ENCODE measurements at regions of chr4 and their contacts with region 1.

Region 1: GRCh38 chr4:145618932-145619638 is at the start of gene MMAA:
- DNase-seq: peak; percentile 75
- ATAC-seq: peak; percentile 93
- H3K4me3 ChIP-seq: peak within 1 kb of the TSS; percentile 88
- H3K27ac ChIP-seq: peak within 1 kb of the TSS; percentile 89
- H3K4me1 ChIP-seq: peaks cover 9% of the 10 kb centered on the region; the same call in 1 of the 2 replicates
- H3K27me3 ChIP-seq: no peaks in the 10 kb centered on the region
- CTCF ChIP-seq: peak; percentile 42 to 63 (median 55)
- EP300 ChIP-seq: 0 out of 4 replicates have a peak, but pooled peaks of 1 of the 2 experiments have one; percentile 30
- POLR2A ChIP-seq: peak; percentile 99
- RAD21 ChIP-seq: peak; percentile 47
- polyA plus RNA-seq, gene MMAA: 9.2 to 11.0 TPM

Region 2: DNA sequence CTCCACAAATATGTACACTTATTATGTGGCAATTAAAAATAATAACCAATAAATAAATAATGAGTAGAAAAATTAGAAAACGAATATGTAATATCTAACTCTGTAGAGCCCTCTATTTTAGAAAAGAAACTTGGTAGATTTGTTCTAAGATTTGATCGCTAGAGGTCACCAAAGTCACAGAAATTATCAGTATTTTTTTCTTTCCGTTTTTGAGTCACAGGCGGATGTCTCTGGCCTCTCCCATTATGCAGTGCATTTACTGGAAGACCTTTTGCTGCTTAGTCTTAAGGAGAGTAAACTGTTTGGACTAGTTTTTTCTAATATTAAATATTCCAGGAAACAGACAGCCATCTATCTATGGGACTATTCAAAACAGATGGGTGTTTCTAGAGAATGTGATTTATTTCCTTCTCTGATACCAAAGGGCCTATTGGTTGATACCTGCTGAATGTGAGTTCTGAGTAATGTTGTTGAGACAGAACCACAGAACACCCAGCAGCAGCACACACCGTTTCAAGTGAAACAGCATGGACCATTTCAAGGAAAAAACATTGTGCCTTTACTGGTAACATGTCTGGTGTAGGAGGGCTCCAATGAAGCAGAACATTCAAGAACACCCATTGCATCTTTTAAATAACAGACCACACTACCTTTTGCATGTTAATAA is 1444.6 kb before region 1 on chr4:
- CTCF ChIA-PET with region 1: interaction called, 6 read pairs
- POLR2A ChIA-PET with region 1: no interaction called
- RAD21 ChIA-PET with region 1: no interaction called
- SMC1A ChIA-PET with region 1: no interaction called
- in situ Hi-C with region 1: loop called (anchors 25 kb)
- intact Hi-C with region 1: no loop called
- DNase-seq: peak; percentile 16
- ATAC-seq: peak; percentile 86
- H3K4me3 ChIP-seq: no peak overlapping the region
- H3K27ac ChIP-seq: no peak overlapping the region
- H3K4me1 ChIP-seq: no peaks in the 10 kb centered on the region
- H3K27me3 ChIP-seq: no peaks in the 10 kb centered on the region; a peak in 1 of 4 replicates
- CTCF ChIP-seq: peak; percentile 32 to 63 (median 40); a peak in 5 of 6 replicates
- EP300 ChIP-seq: no peak
- POLR2A ChIP-seq: no peak
- RAD21 ChIP-seq: peak; percentile 83

Region 3: GRCh38 chr4:145180298-145181090 is 438.6 kb before region 1 on chr4 and contains the start of gene OTUD4:
- CTCF ChIA-PET with region 1: interaction called, 11 read pairs
- POLR2A ChIA-PET with region 1: interaction called, 12 read pairs
- RAD21 ChIA-PET with region 1: interaction called, 6 read pairs
- SMC1A ChIA-PET with region 1: interaction called, 16 read pairs
- in situ Hi-C with region 1: no loop called
- intact Hi-C with region 1: loop called (anchors 2 kb)
- DNase-seq: peak; percentile 79
- ATAC-seq: peak; percentile 81
- H3K4me3 ChIP-seq: peak within 1 kb of the TSS; percentile 91
- H3K27ac ChIP-seq: peak within 1 kb of the TSS; percentile 95
- H3K4me1 ChIP-seq: peaks cover 25% of the 10 kb centered on the region
- H3K27me3 ChIP-seq: no peaks in the 10 kb centered on the region
- CTCF ChIP-seq: peak; percentile 20 to 44 (median 23); a peak in 4 of 6 replicates
- EP300 ChIP-seq: peak; percentile 33 to 50; a peak in 1 of 4 replicates
- POLR2A ChIP-seq: peak; percentile 80
- RAD21 ChIP-seq: peak; percentile 51; the same call in 1 of the 2 replicates
- polyA plus RNA-seq, gene OTUD4: 2.8 to 4.4 TPM

Region 4: DNA sequence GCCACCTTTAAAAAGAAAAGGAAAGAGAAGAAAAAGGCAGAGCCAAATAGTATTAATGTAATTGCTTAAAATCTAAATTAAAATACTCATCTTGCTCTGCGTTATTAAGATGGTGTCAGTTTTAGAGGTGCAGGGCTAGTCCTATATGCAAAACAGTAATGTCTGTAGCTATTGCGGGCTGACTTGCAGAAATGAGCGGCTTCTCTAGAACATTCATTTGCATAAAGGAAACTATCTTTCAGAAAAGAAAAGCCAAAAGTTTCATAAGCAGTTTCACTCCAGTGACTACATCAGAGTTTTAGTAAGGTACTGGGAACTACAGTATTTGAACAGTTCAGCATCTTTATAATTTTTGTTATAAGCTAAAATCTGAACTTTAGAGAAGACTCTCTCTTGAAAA is 131.5 kb before region 1 on chr4:
- CTCF ChIA-PET with region 1: no interaction called
- POLR2A ChIA-PET with region 1: no interaction called
- RAD21 ChIA-PET with region 1: no interaction called
- SMC1A ChIA-PET with region 1: no interaction called
- in situ Hi-C with region 1: no loop called
- intact Hi-C with region 1: loop called (anchors 5 kb)
- DNase-seq: peak; percentile 71
- ATAC-seq: peak; percentile 99
- H3K4me3 ChIP-seq: peak overlapping the region; percentile 60; the same call in 1 of the 2 replicates
- H3K27ac ChIP-seq: peak overlapping the region; percentile 56
- H3K4me1 ChIP-seq: peaks cover 9% of the 10 kb centered on the region; the same call in 1 of the 2 replicates
- H3K27me3 ChIP-seq: no peaks in the 10 kb centered on the region; a peak in 2 of 4 replicates
- CTCF ChIP-seq: no peak
- EP300 ChIP-seq: peak in 1 of 2 experiments; percentile 67; a peak in 2 of 4 replicates
- POLR2A ChIP-seq: no peak
- RAD21 ChIP-seq: no peak

Region 5: DNA sequence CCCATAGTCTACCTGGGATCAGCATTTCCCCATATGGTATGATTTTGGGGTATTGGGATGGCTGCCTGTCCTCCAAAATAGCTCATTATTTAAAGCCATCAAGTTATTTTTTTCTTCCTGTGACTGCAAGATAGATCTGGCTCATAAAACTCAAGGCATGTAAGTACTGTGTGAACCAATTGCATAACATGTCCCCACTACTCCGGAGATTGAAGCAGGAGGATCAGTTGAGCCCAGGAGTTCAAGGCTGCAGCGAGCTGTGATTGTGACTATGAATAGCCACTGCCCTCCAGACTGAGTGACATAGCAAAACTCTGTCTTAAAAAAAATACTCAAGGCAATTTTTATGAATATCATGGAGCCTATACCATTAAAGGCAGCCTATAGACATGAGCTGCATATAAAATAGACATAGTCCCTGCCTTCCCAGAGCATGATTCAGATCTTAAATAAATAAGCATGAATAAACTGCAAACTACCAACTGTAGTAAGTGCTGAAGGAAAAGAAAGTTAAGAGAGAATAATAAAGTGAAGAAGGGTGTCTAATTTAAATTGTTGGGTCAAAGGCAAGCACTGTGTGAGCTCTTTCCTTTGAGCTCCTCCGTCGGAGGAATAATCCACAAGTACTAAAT is 16.8 kb before region 1 on chr4:
- CTCF ChIA-PET with region 1: interaction called, 12 read pairs
- POLR2A ChIA-PET with region 1: no interaction called
- RAD21 ChIA-PET with region 1: interaction called, 4 read pairs
- SMC1A ChIA-PET with region 1: interaction called, 11 read pairs
- in situ Hi-C with region 1: no loop called
- intact Hi-C with region 1: no loop called
- DNase-seq: no peak
- ATAC-seq: no peak
- H3K4me3 ChIP-seq: no peak overlapping the region
- H3K27ac ChIP-seq: no peak overlapping the region
- H3K4me1 ChIP-seq: no peaks in the 10 kb centered on the region
- H3K27me3 ChIP-seq: no peaks in the 10 kb centered on the region; a peak in 1 of 4 replicates
- CTCF ChIP-seq: no peak
- EP300 ChIP-seq: no peak
- POLR2A ChIP-seq: no peak
- RAD21 ChIP-seq: no peak

Region 6: GRCh38 chr4:145732895-145733880 is 114.1 kb after region 1 on chr4:
- CTCF ChIA-PET with region 1: no interaction called
- POLR2A ChIA-PET with region 1: no interaction called
- RAD21 ChIA-PET with region 1: interaction called, 4 read pairs
- SMC1A ChIA-PET with region 1: interaction called, 3 read pairs
- in situ Hi-C with region 1: no loop called
- intact Hi-C with region 1: loop called (anchors 5 kb)
- DNase-seq: peak; percentile 35
- ATAC-seq: peak; percentile 95
- H3K4me3 ChIP-seq: peak overlapping the region; percentile 85
- H3K27ac ChIP-seq: peak overlapping the region; percentile 6; the same call in 1 of the 2 replicates
- H3K4me1 ChIP-seq: peaks cover 16% of the 10 kb centered on the region
- H3K27me3 ChIP-seq: no peaks in the 10 kb centered on the region; a peak in 1 of 4 replicates
- CTCF ChIP-seq: no peak
- EP300 ChIP-seq: no peak
- POLR2A ChIP-seq: peak; percentile 47; the same call in 1 of the 2 replicates
- RAD21 ChIP-seq: no peak

Region 7: GRCh38 chr4:145830699-145831098 is 211.6 kb after region 1 on chr4:
- CTCF ChIA-PET with region 1: no interaction called
- POLR2A ChIA-PET with region 1: interaction called, 3 read pairs
- RAD21 ChIA-PET with region 1: interaction called, 3 read pairs
- SMC1A ChIA-PET with region 1: interaction called, 18 read pairs
- in situ Hi-C with region 1: no loop called
- intact Hi-C with region 1: no loop called
- DNase-seq: no peak
- ATAC-seq: peak; percentile 79
- H3K4me3 ChIP-seq: 0 out of 2 replicates have a peak overlapping the region, but pooled peaks have one; percentile 16
- H3K27ac ChIP-seq: peak overlapping the region; percentile 77
- H3K4me1 ChIP-seq: peaks cover 30% of the 10 kb centered on the region
- H3K27me3 ChIP-seq: no peaks in the 10 kb centered on the region
- CTCF ChIP-seq: no peak
- EP300 ChIP-seq: 0 out of 4 replicates have a peak, but pooled peaks of 1 of the 2 experiments have one; percentile 20
- POLR2A ChIP-seq: no peak
- RAD21 ChIP-seq: no peak